Right ventricle myocardium inferior (tissue), 1 donor: ENCODE measurements at regions of chr7 and their contacts with region 1.

Region 1: DNA sequence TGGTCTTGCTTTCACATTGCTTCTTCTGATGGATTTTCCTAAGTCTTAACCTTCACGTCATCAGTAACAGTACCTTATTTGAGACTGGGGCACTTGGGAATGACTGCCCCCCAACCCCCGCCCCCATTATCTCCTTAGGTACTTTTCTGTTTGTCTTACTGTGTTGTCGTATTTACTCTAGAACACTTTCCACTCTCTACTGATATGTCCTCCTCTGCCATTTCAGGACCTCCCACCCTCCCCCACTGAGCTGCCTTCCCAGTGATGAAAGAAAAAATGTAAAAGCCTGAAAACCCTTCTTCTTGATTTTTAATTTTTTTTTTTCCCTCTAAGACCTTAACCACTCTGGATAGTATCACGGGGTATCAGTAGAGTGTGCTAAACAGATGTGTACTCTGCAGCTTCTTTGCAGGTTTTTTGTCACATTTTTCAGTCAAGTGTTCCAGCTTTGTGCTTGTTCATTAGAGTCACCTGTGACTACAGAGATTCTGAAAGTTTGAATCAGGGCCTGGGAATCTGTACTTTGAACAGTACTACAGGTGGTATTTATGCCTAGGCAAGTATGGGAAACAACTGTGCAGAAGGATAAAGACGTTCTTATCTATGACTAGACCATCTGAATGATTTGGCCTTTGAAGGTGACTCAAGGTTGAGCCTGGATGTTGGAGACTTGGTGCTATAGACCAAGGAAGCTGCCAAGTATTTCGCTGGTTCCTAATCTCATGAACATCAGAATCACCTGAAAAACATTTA is 8.3 kb downstream of the CALU start:
- DNase-seq: no peak
- ATAC-seq: no peak

Region 2: GRCh38 chr7:128777156-128778123 is 29.9 kb after region 1 on chr7:
- intact Hi-C with region 1: no loop called
- DNase-seq: no peak
- ATAC-seq: no peak

Region 3: GRCh38 chr7:128830231-128831177 is 83.0 kb after region 1 on chr7 and contains the start of gene FLNC:
- intact Hi-C with region 1: loop called (anchors 5 kb)
- DNase-seq: peak; percentile 80
- ATAC-seq: peak; percentile 24
- total RNA-seq, gene FLNC: 905 TPM